ENCODE measurements at regions of chr11 and their contacts with region 1.

Region 1: DNA sequence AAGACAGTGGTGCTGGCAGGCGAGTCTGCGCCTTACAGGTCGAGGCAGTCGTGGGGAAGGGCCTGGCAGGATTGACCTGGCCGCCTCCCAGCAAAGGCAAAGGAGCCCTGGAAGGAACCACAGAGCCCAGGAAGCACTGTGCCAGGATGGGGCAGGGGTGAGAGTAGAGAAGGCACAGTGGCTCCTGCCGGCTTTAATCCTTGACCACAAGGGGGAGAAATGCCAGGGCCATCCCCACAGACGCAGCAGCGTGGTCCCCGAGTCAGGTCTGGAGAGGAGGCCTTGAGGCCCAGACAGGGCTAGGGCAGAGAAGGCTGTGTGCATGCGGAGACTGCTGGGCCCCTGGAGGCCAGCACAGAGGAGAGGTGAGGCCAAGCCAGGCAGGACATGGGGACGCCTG is 9.9 kb upstream of the NDUFS8 start:
- DNase-seq: peak in 1 of 2 experiments; percentile 88
- H3K4me3 ChIP-seq: no peak overlapping the region
- H3K27ac ChIP-seq: no peak overlapping the region
- H3K4me1 ChIP-seq: peaks cover 45% of the 10 kb centered on the region
- H3K27me3 ChIP-seq: no peaks in the 10 kb centered on the region
- CTCF ChIP-seq: peak; percentile 45

Region 2: GRCh38 chr11:68003846-68004550 is 16.6 kb before region 1 on chr11 and contains the start of gene UNC93B1:
- CTCF ChIA-PET with region 1: interaction called, 4 read pairs
- POLR2A ChIA-PET with region 1: no interaction called
- intact Hi-C with region 1: loop called (anchors 1 kb)
- DNase-seq: peak; percentile 83 to 92
- H3K4me3 ChIP-seq: peak within 1 kb of the TSS; percentile 68
- H3K27ac ChIP-seq: no peak within 1 kb of the TSS
- H3K4me1 ChIP-seq: peaks cover 12% of the 10 kb centered on the region
- H3K27me3 ChIP-seq: no peaks in the 10 kb centered on the region
- CTCF ChIP-seq: no peak
- total RNA-seq, gene UNC93B1: 75.5 and 94.4 TPM in 2 replicates

Region 3: DNA sequence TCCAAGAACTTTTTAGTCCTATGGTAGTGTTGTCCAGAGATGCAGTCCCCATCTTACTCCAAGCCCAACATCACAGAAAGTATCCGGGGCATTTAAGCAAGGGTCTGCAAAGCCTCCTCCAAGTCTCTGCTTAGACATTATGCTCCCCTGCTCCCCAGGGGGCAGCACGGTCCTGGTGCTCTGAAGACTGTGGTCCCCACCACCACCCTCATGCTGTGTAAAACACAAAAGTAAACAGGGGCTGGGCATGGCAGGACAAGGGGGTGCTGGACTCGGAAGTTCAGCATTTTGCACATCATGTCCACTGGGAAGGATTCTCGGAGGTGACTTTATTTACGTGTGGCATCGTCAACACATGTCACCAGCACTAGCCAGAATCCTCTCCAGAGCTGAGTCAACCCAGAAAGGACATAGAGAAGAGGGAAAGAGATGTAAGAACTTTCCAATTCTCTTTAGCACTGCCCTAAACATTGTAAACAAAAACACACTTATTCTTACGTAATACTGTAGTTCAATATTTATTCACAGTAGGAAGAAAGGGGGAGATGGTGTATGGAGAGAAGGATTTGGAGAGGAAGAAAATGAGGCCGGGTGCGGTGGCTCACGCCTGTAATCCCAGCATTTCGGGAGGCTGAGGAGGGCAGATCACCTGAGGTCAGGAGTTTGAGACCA is 55.9 kb after region 1 on chr11:
- CTCF ChIA-PET with region 1: no interaction called
- POLR2A ChIA-PET with region 1: no interaction called
- intact Hi-C with region 1: no loop called
- DNase-seq: no peak
- H3K4me3 ChIP-seq: no peak overlapping the region
- H3K27ac ChIP-seq: no peak overlapping the region
- H3K4me1 ChIP-seq: peaks cover 14% of the 10 kb centered on the region
- H3K27me3 ChIP-seq: no peaks in the 10 kb centered on the region
- CTCF ChIP-seq: no peak

Region 4: DNA sequence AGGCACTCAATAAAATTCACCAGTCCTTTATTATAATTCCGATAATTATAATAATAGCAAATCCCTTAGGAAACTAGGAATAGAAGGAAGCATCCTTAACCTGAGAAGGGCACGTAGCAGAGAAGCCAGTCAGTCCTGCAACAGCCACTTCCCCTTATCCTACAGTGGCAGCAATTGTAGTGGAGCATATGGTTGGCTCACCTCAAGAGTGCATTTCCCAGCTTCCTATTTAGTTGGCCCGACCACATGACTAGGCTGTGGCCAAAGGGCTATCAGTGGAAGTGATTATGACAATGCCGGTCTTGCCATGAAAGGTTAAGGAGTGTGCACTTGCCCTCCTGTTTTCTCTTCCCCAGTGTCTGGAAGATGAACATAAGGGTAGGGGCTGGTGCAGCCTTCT is 703.7 kb after region 1 on chr11:
- CTCF ChIA-PET with region 1: no interaction called
- POLR2A ChIA-PET with region 1: no interaction called
- intact Hi-C with region 1: no loop called
- DNase-seq: no peak
- H3K4me3 ChIP-seq: no peak overlapping the region
- H3K27ac ChIP-seq: no peak overlapping the region
- H3K4me1 ChIP-seq: no peaks in the 10 kb centered on the region
- H3K27me3 ChIP-seq: peaks cover 18% of the 10 kb centered on the region
- CTCF ChIP-seq: no peak

Measured in PC-9 (cell line).